Ascending aorta (tissue), 2 donors: ENCODE measurements at regions of chr2 and their contacts with region 1.

Region 1: GRCh38 chr2:190880378-190881073 is at the start of gene GLS:
- DNase-seq: peak; percentile 89 to 98
- H3K4me3 ChIP-seq: peak within 1 kb of the TSS; percentile 92 to 99
- H3K27ac ChIP-seq: peak within 1 kb of the TSS; percentile 98
- H3K4me1 ChIP-seq: peaks cover 0 to 28% of the 10 kb centered on the region in 2 donors
- H3K27me3 ChIP-seq: no peaks in the 10 kb centered on the region
- CTCF ChIP-seq: no peak
- total RNA-seq, gene GLS: 132 TPM

Region 2: GRCh38 chr2:189210250-189211075 is 1670.1 kb before region 1 on chr2:
- intact Hi-C with region 1: loop called (anchors 10 kb)
- DNase-seq: peak in 1 of 2 donors; percentile 86
- H3K4me3 ChIP-seq: peak overlapping the region; percentile 35 to 50
- H3K27ac ChIP-seq: peak overlapping the region; percentile 81 to 89
- H3K4me1 ChIP-seq: peaks cover 0 to 21% of the 10 kb centered on the region in 2 donors
- H3K27me3 ChIP-seq: no peaks in the 10 kb centered on the region
- CTCF ChIP-seq: no peak

Region 3: GRCh38 chr2:190849774-190850173 is 30.8 kb before region 1 on chr2:
- intact Hi-C with region 1: loop called (anchors 2 kb)
- DNase-seq: no peak
- H3K4me3 ChIP-seq: no peak overlapping the region
- H3K27ac ChIP-seq: no peak overlapping the region
- H3K4me1 ChIP-seq: peaks cover 0 to 23% of the 10 kb centered on the region in 2 donors
- H3K27me3 ChIP-seq: no peaks in the 10 kb centered on the region
- CTCF ChIP-seq: no peak

Region 4: DNA sequence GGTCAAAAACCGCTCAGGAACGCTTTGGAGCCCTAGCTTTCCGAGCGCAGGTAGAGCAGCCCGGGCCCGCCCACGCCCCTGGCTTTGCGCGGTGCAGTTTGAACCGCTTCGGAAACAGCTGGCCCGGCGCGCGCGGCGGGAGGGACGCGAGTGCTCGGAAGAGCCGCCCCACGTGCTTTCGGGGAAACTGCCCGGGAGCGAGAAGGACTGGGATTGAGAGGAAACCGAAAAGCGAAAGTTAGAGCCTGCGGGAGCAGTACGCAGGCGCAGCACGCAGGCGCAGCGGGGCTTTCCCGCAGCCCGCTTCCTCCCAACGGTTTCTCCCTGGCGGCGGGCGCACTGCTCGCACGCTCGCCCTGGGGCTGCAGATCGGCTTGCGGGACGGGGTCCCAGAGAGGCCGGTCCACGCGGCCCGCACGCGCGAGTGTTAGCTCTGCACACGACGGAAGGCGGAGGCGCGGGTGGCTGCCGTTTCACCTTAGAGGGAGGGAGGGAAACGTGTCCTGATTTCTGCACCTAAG is 139.8 kb after region 1 on chr2:
- intact Hi-C with region 1: loop called (anchors 2 kb)
- DNase-seq: peak; percentile 73 to 96
- H3K4me3 ChIP-seq: peak overlapping the region; percentile 77 to 85
- H3K27ac ChIP-seq: peak overlapping the region; percentile 92 to 93
- H3K4me1 ChIP-seq: peaks cover 0 to 4% of the 10 kb centered on the region in 2 donors
- H3K27me3 ChIP-seq: no peaks in the 10 kb centered on the region
- CTCF ChIP-seq: peak; percentile 9 to 47 (median 18)